ENCODE measurements at regions of chr20 and their contacts with region 1.

Region 1: GRCh38 chr20:32789896-32790750 is 27.9 kb downstream of the DNMT3B start:
- DNase-seq: peak; percentile 71 to 92
- ATAC-seq: peak; percentile 96
- H3K4me3 ChIP-seq: no peak overlapping the region
- H3K27ac ChIP-seq: no peak overlapping the region
- H3K4me1 ChIP-seq: no peaks in the 10 kb centered on the region
- CTCF ChIP-seq: peak; percentile 82
- EP300 ChIP-seq: no peak
- POLR2A ChIP-seq: no peak
- RAD21 ChIP-seq: peak; percentile 66 to 83

Region 2: GRCh38 chr20:32807706-32808105 is 17.6 kb after region 1 on chr20:
- CTCF ChIA-PET with region 1: interaction called, 61 read pairs
- POLR2A ChIA-PET with region 1: no interaction called
- DNase-seq: no peak
- ATAC-seq: no peak
- H3K4me3 ChIP-seq: no peak overlapping the region
- H3K27ac ChIP-seq: no peak overlapping the region
- H3K4me1 ChIP-seq: no peaks in the 10 kb centered on the region
- CTCF ChIP-seq: no peak
- EP300 ChIP-seq: no peak
- POLR2A ChIP-seq: no peak
- RAD21 ChIP-seq: no peak

Region 3: GRCh38 chr20:32945710-32946221 is 155.6 kb after region 1 on chr20:
- CTCF ChIA-PET with region 1: interaction called, 14 read pairs
- POLR2A ChIA-PET with region 1: no interaction called
- DNase-seq: peak in 1 of 2 experiments; percentile 23
- ATAC-seq: peak; percentile 72 to 78; a peak in 5 of 6 replicates
- H3K4me3 ChIP-seq: no peak overlapping the region
- H3K27ac ChIP-seq: no peak overlapping the region
- H3K4me1 ChIP-seq: no peaks in the 10 kb centered on the region
- CTCF ChIP-seq: peak; percentile 37; the same call in 2 of the 3 replicates
- EP300 ChIP-seq: no peak
- POLR2A ChIP-seq: no peak
- RAD21 ChIP-seq: peak; percentile 27 to 32; a peak in 3 of 5 replicates